Activated CD4-positive, alpha-beta T cell treated with anti-CD3 and anti-CD28 coated beads for 36 hours (primary cell): ENCODE measurements at regions of chr12 and their contacts with region 1.

Region 1: GRCh38 chr12:575948-576612 is 87.2 kb downstream of the NINJ2 start:
- DNase-seq: peak; percentile 91
- ATAC-seq: peak; percentile 83
- H3K4me3 Mint-ChIP-seq: peak overlapping the region; percentile 46
- H3K27ac Mint-ChIP-seq: peak overlapping the region; percentile 77
- H3K4me1 Mint-ChIP-seq: peaks cover 42% of the 10 kb centered on the region
- H3K27me3 Mint-ChIP-seq: no peaks in the 10 kb centered on the region

Region 2: GRCh38 chr12:604956-605355 is 28.9 kb after region 1 on chr12:
- CTCF ChIA-PET with region 1: interaction called, 10 read pairs
- POLR2A ChIA-PET with region 1: no interaction called
- intact Hi-C with region 1: no loop called
- DNase-seq: no peak
- ATAC-seq: no peak
- H3K4me3 Mint-ChIP-seq: no peak overlapping the region
- H3K27ac Mint-ChIP-seq: no peak overlapping the region
- H3K4me1 Mint-ChIP-seq: peaks cover 10% of the 10 kb centered on the region
- H3K27me3 Mint-ChIP-seq: no peaks in the 10 kb centered on the region

Region 3: DNA sequence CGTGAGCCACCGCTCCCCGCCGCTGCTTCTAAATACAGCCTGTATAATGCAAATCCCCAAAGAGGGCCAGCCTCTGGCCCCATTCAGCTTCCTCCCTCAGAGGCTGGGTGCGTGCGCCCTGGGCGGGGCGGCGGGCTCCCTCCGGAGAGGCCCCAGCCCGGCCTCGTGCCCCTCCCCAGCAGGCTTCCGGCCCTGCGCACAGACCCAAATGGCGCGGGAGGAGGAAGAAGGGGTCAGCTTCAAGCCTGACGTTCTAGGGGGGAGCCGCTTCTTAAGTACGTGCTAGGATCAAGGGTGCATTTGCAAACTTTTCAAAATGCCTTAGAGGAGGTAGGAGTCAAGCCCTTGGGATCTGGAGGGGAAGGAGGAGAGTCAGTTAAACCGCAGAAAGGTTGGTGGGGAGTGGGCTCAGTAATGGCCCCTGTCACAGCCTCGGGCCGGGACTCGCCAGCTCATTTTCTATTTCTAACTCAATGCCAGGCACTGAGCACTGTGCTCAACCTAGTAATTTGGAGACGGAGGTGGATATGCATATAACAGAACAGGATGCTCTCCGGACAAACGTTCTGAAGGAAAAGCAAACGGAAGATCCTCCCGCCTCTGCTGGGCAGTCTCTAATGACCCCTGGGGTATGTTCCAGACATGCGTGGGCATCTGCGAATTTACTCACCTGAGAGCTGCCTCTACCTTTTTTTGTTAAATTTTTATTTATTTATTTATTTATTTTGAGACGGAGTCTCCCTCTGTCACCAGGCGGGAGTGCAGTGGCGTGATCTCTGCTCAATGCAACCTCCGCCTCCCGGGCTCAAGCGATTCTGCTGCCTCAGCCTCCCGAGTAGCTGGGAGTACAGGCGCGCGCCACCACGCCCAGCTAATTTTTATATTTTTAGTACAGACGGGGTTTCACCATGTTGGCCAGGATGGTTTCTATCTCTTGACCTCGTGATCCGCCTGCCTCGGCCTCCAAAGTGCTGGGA is 54.9 kb after region 1 on chr12:
- CTCF ChIA-PET with region 1: interaction called, 8 read pairs
- POLR2A ChIA-PET with region 1: interaction called, 6 read pairs
- intact Hi-C with region 1: loop called in 1 of 2 experiments (anchors 2 kb)
- DNase-seq: peak; percentile 91
- ATAC-seq: peak; percentile 98
- H3K4me3 Mint-ChIP-seq: peak overlapping the region; percentile 88
- H3K27ac Mint-ChIP-seq: peak overlapping the region; percentile 100
- H3K4me1 Mint-ChIP-seq: peaks cover 47% of the 10 kb centered on the region
- H3K27me3 Mint-ChIP-seq: no peaks in the 10 kb centered on the region

Region 4: DNA sequence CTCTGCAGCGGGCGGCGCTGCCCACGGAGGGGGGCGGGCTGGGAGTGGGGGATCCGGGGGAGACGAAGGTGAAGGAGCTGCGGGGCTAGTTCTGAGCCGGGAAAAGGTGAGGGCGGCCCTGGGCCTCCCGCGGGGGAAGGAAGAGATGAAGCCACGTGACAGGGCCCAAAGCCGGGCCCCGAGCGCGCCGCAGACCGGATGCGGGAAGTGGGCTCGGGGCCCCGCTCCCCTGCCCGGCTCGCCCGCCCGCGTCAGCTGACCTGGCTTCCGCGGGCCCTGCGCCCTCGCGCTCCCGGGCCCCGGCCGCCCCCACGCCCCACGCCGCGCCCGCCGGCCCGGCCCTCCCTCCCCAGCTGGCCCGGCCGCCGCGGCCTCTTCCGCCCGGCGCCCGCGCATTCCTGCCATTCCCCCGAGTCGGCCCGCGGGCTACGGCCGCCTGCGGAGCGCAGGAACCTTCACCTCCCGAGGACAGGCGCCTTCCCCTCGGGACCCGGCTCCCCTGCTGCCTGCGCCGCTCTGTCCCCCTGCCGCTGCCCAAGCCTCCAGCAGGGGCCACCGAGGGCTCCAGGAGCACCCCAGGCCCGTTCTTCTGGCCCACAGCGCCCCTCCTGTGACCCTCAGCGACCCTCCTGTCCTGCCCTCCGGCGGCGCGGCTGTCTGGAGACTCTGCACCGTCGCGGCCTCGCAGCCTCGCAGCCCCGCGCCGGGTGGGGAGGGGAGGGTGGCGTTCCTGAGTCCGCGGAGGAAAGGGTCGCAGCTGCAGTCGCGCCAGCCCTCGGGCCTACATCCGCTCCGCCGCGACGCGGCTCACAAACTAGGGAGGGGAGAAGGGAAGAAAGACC is 66.8 kb after region 1 on chr12:
- CTCF ChIA-PET with region 1: interaction called, 6 read pairs
- POLR2A ChIA-PET with region 1: interaction called, 3 read pairs
- intact Hi-C with region 1: loop called (anchors 1 kb)
- DNase-seq: peak; percentile 85
- ATAC-seq: peak; percentile 59
- H3K4me3 Mint-ChIP-seq: peak overlapping the region; percentile 83
- H3K27ac Mint-ChIP-seq: peak overlapping the region; percentile 97
- H3K4me1 Mint-ChIP-seq: peaks cover 64% of the 10 kb centered on the region
- H3K27me3 Mint-ChIP-seq: no peaks in the 10 kb centered on the region

Region 5: DNA sequence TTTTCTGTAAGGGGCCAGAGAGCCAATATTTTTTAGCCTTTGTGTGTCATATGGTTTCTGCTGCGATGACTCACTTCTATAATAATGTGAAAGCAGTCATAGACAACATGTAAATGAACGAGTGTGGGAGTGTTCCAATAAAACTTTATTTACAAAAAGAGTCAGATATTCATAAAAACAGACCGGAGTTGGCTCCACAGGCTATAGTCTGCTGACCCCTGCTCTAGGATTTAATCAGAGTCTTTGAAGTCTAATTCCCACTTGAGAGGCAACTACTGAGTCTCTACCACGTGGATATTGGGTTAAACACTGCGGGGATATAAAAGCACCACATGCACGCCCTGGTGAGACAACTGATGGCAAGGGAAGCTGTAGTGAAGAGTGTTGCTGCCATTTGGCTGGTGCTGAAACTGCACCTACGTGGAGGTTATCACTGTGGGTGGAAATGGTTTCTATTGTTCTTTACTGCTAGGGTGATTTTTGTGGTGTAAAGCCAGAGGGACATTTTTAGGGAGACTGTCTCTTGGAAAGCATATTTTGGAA is 90.8 kb after region 1 on chr12:
- CTCF ChIA-PET with region 1: interaction called, 10 read pairs
- POLR2A ChIA-PET with region 1: no interaction called
- intact Hi-C with region 1: loop called in 1 of 2 experiments (anchors 2 kb)
- DNase-seq: peak; percentile 53
- ATAC-seq: peak; percentile 45
- H3K4me3 Mint-ChIP-seq: peak overlapping the region; percentile 36
- H3K27ac Mint-ChIP-seq: peak overlapping the region; percentile 79
- H3K4me1 Mint-ChIP-seq: peaks cover 86% of the 10 kb centered on the region
- H3K27me3 Mint-ChIP-seq: no peaks in the 10 kb centered on the region